ENCODE measurements at regions of chr12 and their contacts with region 1.

Region 1: DNA sequence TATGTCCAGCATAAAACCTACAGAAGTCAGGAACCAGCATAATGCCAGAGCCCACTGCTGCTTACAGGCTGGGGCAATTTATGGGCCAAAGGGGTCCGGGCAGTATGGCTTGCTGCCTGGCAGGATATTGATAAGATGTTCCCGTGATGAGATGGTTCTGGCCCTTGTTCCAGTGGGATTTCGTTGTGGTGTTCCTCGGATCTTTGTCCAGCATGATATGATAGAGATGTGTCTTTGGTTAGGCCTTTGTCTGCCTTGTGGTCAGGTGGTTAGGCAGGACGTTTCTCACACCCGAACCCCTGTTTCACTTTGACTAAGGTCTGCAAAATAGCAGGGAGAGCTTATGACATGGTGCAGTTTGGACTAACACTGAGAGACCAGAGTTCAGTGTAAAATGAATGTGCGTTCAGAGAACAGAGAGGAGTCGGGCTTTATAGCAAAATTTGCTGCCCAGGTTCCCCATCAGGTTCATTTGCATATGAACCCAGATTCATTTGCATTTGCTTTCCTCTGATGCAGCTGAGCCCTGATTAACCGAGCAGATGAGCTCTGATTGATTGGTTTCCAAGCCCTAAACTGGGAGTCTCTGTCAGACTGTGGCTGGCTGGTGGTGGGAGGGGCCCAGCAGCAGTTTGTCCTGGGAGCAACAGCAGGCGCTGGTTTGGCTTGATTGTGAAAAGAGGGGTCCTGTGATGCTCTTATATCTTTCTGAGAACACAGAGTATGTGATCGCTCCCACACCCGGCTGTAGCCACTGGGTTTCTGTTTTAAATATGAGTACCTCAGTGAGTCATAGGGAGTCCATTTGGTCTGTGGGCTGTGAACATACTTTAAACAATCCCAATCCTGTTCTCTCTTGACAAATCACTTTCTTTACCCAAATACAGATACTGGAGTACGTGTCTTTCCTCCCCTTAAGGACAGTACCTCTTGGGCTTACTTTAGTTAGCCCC is 156.3 kb upstream of the PZP start:
- DNase-seq: peak; percentile 73
- H3K4me3 Mint-ChIP-seq: peak overlapping the region; percentile 6
- H3K27ac Mint-ChIP-seq: peak overlapping the region; percentile 33
- H3K4me1 Mint-ChIP-seq: peaks cover 42% of the 10 kb centered on the region
- H3K27me3 Mint-ChIP-seq: peaks cover 25% of the 10 kb centered on the region

Region 2: GRCh38 chr12:9347328-9348127 is 17.0 kb before region 1 on chr12:
- CTCF ChIA-PET with region 1: interaction called, 3 read pairs
- POLR2A ChIA-PET with region 1: no interaction called
- intact Hi-C with region 1: loop called (anchors 2 kb)
- DNase-seq: peak; percentile 25
- H3K4me3 Mint-ChIP-seq: no peak overlapping the region
- H3K27ac Mint-ChIP-seq: no peak overlapping the region
- H3K4me1 Mint-ChIP-seq: peaks cover 2% of the 10 kb centered on the region
- H3K27me3 Mint-ChIP-seq: no peaks in the 10 kb centered on the region

Measured in activated CD4-positive, alpha-beta memory T cell treated with anti-CD3 and anti-CD28 coated beads for 36 hours (primary cell).